ENCODE measurements at regions of chr5 and their contacts with region 1.

Region 1: DNA sequence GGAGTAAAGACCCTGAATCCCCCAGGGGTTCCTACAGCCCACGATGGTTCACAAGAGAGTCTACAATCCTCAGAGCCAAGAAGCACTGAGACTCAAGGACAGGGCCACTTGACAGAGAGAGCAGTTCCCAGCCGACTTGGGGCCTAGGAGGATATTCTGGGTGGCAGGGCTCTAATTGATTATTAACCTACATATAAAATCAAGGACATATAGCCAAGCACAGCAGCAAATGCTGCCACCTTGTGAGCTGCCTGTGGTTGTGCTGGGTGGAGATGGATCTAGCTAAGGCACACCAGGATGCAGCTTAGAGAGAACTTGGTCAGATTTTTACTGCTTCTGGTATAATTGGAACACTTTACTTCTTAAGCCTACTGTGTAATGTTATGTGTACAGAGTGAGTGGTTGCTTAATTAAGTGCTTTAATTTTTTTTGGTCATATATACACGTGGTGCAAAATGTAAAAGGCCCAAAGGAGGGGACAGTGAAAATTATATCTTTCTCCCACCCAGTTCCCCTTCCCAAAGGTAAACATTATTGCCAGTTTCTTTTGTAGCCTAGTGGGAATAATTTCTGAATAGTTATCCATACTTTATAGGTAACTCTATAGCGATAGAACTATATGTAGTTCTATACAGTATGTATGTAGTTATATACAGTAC is 78.8 kb downstream of the F2RL2 start:
- DNase-seq: peak; percentile 73
- H3K4me3 Mint-ChIP-seq: peak overlapping the region; percentile 75
- H3K27ac Mint-ChIP-seq: peak overlapping the region; percentile 99
- H3K4me1 Mint-ChIP-seq: peaks cover 93% of the 10 kb centered on the region
- H3K27me3 Mint-ChIP-seq: no peaks in the 10 kb centered on the region

Region 2: DNA sequence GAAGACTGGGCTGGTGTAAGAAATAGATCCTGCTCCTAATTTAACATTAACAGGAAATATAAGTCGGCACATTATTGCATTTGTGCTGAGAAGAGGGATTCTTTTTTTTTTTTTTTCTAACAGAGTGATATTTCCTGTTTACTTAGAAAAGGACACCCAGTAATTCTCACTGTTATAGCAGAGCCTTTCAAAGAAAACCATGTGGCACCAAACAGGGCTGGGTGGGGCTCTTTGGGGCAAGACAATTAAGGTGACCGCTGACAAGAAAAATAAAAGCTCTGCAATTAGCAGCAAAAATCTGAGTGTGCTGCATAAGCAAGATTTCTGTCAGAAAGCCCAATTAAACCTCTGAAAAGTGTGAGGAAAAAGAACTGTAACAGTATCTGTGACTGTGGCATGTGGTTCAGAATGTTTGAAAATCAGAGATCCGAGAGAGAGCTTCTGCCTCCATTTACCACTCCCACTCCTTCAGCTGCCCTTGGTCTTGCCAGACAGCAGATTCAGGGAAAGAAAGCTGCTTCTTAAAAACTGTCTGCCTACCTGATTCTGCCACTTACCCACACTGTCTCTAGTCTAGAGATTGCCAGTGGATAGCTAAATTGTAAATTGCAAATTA is 218.4 kb before region 1 on chr5:
- CTCF ChIA-PET with region 1: interaction called, 20 read pairs
- POLR2A ChIA-PET with region 1: interaction called, 49 read pairs
- DNase-seq: peak; percentile 79
- H3K4me3 Mint-ChIP-seq: peak overlapping the region; percentile 44
- H3K27ac Mint-ChIP-seq: peak overlapping the region; percentile 99
- H3K4me1 Mint-ChIP-seq: peaks cover 72% of the 10 kb centered on the region
- H3K27me3 Mint-ChIP-seq: no peaks in the 10 kb centered on the region

Region 3: DNA sequence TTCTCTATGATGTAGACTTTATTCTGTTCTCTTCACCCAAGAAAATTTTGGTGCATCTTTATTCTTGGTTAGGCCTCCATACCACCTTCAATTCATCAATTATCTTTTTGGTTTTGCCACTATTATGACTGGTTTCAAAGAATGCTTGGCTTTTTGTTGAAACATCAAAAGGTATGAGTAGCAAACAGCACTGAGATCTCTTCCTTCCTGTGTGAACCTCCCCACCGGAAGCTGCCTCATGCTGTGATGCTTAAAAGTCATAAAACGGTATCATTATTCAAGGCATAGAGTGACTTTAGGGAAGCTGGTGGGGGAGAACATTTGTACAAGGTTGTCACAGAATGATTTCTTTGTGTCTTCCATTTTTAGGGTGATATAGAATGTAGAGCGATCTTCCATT is 70.7 kb before region 1 on chr5:
- CTCF ChIA-PET with region 1: interaction called, 9 read pairs
- POLR2A ChIA-PET with region 1: interaction called, 20 read pairs
- DNase-seq: peak; percentile 77
- H3K4me3 Mint-ChIP-seq: no peak overlapping the region
- H3K27ac Mint-ChIP-seq: peak overlapping the region; percentile 76
- H3K4me1 Mint-ChIP-seq: peaks cover 74% of the 10 kb centered on the region
- H3K27me3 Mint-ChIP-seq: no peaks in the 10 kb centered on the region

Region 4: GRCh38 chr5:76556511-76557221 is 12.3 kb after region 1 on chr5:
- CTCF ChIA-PET with region 1: interaction called, 12 read pairs
- POLR2A ChIA-PET with region 1: interaction called, 6 read pairs
- DNase-seq: no peak
- H3K4me3 Mint-ChIP-seq: no peak overlapping the region
- H3K27ac Mint-ChIP-seq: peak overlapping the region; percentile 57
- H3K4me1 Mint-ChIP-seq: peaks cover 43% of the 10 kb centered on the region
- H3K27me3 Mint-ChIP-seq: no peaks in the 10 kb centered on the region